HCT116 (cell line): ENCODE measurements at regions of chr14 and their contacts with region 1.

Region 1: DNA sequence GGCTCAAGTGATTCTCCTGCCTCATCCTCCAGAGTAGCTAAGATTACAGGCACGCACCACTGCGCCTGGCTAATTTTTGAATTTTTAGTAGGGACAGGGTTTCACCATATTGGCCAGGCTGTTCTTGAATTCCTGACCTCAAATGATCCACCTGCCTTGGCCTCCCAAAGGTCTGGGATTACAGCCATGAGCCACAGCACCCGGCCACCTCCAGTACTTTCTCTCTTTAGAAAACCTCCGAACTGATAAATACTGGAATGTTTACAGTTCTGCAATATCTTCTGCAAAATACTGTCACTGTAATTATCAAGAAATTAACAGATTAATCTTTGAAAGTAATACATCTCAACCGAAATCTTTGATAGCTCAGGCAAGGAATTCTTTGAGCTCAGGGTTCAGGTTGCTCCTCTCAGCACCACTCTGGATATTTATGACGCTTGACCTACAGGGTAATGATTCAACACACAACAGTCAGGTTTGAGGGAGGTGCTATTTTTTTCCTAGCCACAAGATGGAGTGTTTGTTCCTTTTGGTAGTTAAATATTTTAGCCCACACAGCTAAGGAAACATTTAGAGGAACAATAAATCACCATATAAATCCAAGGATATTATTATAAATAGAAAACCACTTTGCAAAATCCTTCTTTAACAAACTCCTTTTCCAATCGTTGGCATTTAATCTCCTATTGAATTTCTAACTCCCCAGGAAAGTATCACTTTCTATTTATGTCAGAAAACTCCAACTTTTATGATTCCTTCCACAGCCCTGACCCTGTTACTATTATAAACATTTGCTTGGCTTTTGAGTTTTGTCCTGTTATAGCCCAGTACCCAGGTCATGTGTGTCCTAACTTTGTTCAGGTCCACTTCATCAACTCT is 48.6 kb upstream of the GTF2A1 start:
- DNase-seq: peak; percentile 56
- ATAC-seq: peak; percentile 92
- H3K4me3 ChIP-seq: no peak overlapping the region
- H3K27ac ChIP-seq: no peak overlapping the region
- H3K4me1 ChIP-seq: peaks cover 0 to 5% of the 10 kb centered on the region in 2 experiments; a peak in 1 of 4 replicates
- H3K27me3 ChIP-seq: no peaks in the 10 kb centered on the region
- CTCF ChIP-seq: peak; percentile 62 to 87 (median 75)
- POLR2A ChIP-seq: no peak
- RAD21 ChIP-seq: peak; percentile 87

Region 2: GRCh38 chr14:81164167-81164774 is 105.1 kb before region 1 on chr14:
- CTCF ChIA-PET with region 1: no interaction called
- POLR2A ChIA-PET with region 1: no interaction called
- RAD21 ChIA-PET with region 1: no interaction called
- intact Hi-C with region 1: no loop called
- DNase-seq: peak; percentile 83
- ATAC-seq: peak; percentile 99
- H3K4me3 ChIP-seq: no peak overlapping the region
- H3K27ac ChIP-seq: no peak overlapping the region
- H3K4me1 ChIP-seq: peaks cover 0 to 19% of the 10 kb centered on the region in 2 experiments; a peak in 3 of 4 replicates
- H3K27me3 ChIP-seq: no peaks in the 10 kb centered on the region
- CTCF ChIP-seq: peak; percentile 51 to 89 (median 85); a peak in 5 of 6 replicates
- POLR2A ChIP-seq: no peak
- RAD21 ChIP-seq: peak; percentile 78

Region 3: GRCh38 chr14:81295958-81296923 is 26.9 kb after region 1 on chr14:
- CTCF ChIA-PET with region 1: no interaction called
- POLR2A ChIA-PET with region 1: no interaction called
- RAD21 ChIA-PET with region 1: no interaction called
- intact Hi-C with region 1: no loop called
- DNase-seq: no peak
- ATAC-seq: no peak
- H3K4me3 ChIP-seq: no peak overlapping the region
- H3K27ac ChIP-seq: no peak overlapping the region
- H3K4me1 ChIP-seq: no peaks in the 10 kb centered on the region
- H3K27me3 ChIP-seq: no peaks in the 10 kb centered on the region
- CTCF ChIP-seq: no peak
- POLR2A ChIP-seq: no peak
- RAD21 ChIP-seq: no peak

Region 4: GRCh38 chr14:81453166-81453766 is 183.9 kb after region 1 on chr14:
- CTCF ChIA-PET with region 1: interaction called, 93 read pairs
- POLR2A ChIA-PET with region 1: interaction called, 6 read pairs
- RAD21 ChIA-PET with region 1: interaction called, 7 to 24 read pairs
- intact Hi-C with region 1: loop called (anchors 1 kb)
- DNase-seq: peak; percentile 48
- ATAC-seq: peak; percentile 86
- H3K4me3 ChIP-seq: no peak overlapping the region
- H3K27ac ChIP-seq: no peak overlapping the region
- H3K4me1 ChIP-seq: no peaks in the 10 kb centered on the region
- H3K27me3 ChIP-seq: no peaks in the 10 kb centered on the region; the same call in 1 of the 2 replicates
- CTCF ChIP-seq: peak; percentile 67 to 91 (median 86)
- POLR2A ChIP-seq: no peak
- RAD21 ChIP-seq: peak; percentile 86

Region 5: GRCh38 chr14:81464247-81465002 is 195.1 kb after region 1 on chr14:
- CTCF ChIA-PET with region 1: interaction called, 37 read pairs
- POLR2A ChIA-PET with region 1: no interaction called
- RAD21 ChIA-PET with region 1: interaction called, 3 to 11 read pairs
- intact Hi-C with region 1: loop called (anchors 1 kb)
- DNase-seq: peak; percentile 40
- ATAC-seq: peak; percentile 67
- H3K4me3 ChIP-seq: peak overlapping the region; percentile 32 to 49
- H3K27ac ChIP-seq: no peak overlapping the region
- H3K4me1 ChIP-seq: peaks cover 0 to 16% of the 10 kb centered on the region in 2 experiments; a peak in 3 of 4 replicates
- H3K27me3 ChIP-seq: no peaks in the 10 kb centered on the region
- CTCF ChIP-seq: peak; percentile 67 to 95 (median 76)
- POLR2A ChIP-seq: no peak
- RAD21 ChIP-seq: peak; percentile 82